GM12878 (cell line): ENCODE measurements at regions of chr1 and their contacts with region 1.

Region 1: DNA sequence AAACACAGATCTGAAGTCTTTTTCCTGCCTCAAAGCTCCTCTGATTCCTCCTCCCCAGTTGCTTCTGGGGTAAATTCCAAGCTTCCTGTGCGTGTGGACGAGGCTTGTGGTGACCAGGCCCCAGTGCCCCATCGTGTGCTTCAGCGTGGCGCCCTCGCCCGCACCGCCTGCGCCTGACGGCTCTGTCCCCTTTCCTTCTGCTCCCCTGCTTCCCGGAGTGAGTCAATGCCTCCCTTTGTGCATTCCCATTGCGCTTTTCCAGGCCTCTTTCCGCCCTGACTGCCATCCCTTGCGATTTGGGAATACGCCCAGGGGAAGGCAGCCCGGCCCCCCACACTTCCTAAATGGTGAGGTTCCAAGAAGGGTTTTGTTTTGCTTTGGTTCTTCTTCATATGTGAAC is 36.3 kb downstream of the FAAP20 start:
- DNase-seq: no peak
- ATAC-seq: no peak
- H3K4me3 ChIP-seq: no peak overlapping the region
- H3K27ac ChIP-seq: no peak overlapping the region
- H3K4me1 ChIP-seq: no peaks in the 10 kb centered on the region
- H3K27me3 ChIP-seq: no peaks in the 10 kb centered on the region
- CTCF ChIP-seq: no peak
- EP300 ChIP-seq: no peak
- POLR2A ChIP-seq: no peak
- RAD21 ChIP-seq: no peak

Region 2: DNA sequence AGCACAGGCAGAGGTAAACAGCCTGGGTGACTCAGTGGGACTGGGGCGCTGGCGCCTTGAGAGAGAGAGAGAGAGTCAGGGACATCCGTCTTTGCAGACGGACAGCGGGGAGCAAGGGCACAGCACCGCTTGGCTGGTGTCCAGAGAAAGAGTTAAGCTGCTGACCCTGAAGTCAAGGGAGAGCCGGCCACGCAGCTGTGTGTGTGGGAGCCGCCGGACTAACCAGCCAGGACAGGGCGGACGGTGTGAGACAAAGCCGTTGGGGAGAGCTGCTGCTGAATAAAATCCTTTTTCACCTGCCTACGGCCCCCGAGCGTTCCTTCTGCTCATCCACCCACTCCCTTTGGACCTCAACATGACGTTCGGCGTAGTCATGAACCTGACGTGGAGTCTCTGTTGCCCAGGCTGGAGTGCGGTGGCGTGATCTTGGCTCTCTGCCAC is 169.2 kb before region 1 on chr1:
- CTCF ChIA-PET with region 1: no interaction called
- POLR2A ChIA-PET with region 1: no interaction called
- RAD21 ChIA-PET with region 1: no interaction called
- SMC1A ChIA-PET with region 1: no interaction called
- in situ Hi-C with region 1: no loop called
- intact Hi-C with region 1: no loop called
- DNase-seq: no peak
- ATAC-seq: no peak
- H3K4me3 ChIP-seq: no peak overlapping the region
- H3K27ac ChIP-seq: no peak overlapping the region
- H3K4me1 ChIP-seq: no peaks in the 10 kb centered on the region
- H3K27me3 ChIP-seq: no peaks in the 10 kb centered on the region
- CTCF ChIP-seq: no peak
- EP300 ChIP-seq: no peak
- POLR2A ChIP-seq: no peak
- RAD21 ChIP-seq: no peak

Region 3: DNA sequence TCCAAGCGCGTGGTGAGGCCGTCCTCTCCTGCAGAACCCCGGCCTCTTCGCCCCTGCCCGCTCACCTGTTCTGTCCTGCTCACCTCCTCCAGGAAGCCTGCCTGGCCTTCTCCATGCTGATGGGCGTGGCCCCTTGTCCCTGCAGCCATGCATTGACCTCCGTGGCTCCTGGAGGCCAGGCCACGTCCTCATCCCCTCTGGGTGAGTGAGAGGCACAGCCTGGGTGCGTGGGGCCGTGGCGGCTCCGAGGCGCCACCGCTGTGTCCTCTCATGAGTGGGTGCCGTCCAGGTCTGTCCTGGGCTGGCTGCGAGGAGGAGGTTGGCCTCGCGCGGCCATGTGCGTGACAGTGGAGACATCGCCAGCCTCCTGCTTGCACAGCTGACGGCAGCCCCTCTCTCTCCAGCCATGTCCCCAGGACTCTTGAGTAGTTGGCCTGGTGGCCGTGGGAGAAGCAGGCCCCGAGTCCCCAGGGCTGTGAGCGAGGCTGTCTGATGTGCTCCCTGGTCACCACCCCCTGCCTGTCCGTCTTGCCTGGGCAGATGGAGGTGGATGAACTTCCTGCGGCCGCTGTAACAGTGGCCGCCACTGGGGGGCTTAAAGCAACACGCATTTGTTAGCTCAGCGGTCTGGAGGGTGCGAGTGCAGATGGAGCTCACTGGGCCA is 49.9 kb before region 1 on chr1:
- CTCF ChIA-PET with region 1: no interaction called
- POLR2A ChIA-PET with region 1: no interaction called
- RAD21 ChIA-PET with region 1: no interaction called
- SMC1A ChIA-PET with region 1: no interaction called
- in situ Hi-C with region 1: loop called (anchors 5 kb)
- intact Hi-C with region 1: no loop called
- DNase-seq: no peak
- ATAC-seq: no peak
- H3K4me3 ChIP-seq: no peak overlapping the region
- H3K27ac ChIP-seq: no peak overlapping the region
- H3K4me1 ChIP-seq: peaks cover 7% of the 10 kb centered on the region
- H3K27me3 ChIP-seq: no peaks in the 10 kb centered on the region
- CTCF ChIP-seq: peak in 1 of 3 experiments; percentile 28; a peak in 1 of 6 replicates
- EP300 ChIP-seq: no peak
- POLR2A ChIP-seq: no peak
- RAD21 ChIP-seq: no peak